Breast epithelium (tissue), 4 donors: ENCODE measurements at regions of chr4 and their contacts with region 1.

Region 1: GRCh38 chr4:170190265-170190664 is 100.5 kb upstream of the AADAT start:
- DNase-seq: no peak
- H3K4me3 ChIP-seq: no peak overlapping the region
- H3K27ac ChIP-seq: no peak overlapping the region
- H3K4me1 ChIP-seq: no peaks in the 10 kb centered on the region
- H3K27me3 ChIP-seq: no peaks in the 10 kb centered on the region
- CTCF ChIP-seq: no peak
- POLR2A ChIP-seq: no peak

Region 2: DNA sequence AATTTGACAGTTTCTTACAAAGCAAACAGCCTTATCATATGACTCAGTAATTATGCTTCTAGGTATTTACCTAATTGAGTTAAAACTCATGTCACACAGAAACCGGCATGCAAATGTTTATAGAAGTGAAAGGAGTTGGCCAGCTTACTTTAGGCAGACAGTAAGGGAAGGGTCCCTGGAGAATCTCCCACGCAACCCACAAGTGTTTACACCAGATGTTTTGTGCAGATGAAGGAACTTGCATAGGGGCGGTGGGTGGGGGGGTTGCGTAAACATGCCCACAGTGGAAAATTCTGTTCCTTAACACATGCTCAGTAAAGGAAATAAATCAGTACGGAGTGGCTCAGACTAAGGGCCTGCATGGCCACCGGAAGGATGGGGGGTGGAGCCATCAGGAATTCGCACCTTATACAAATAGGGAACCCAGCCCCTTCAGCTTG is 230.0 kb after region 1 on chr4:
- intact Hi-C with region 1: no loop called
- DNase-seq: no peak
- H3K4me3 ChIP-seq: no peak overlapping the region
- H3K27ac ChIP-seq: no peak overlapping the region
- H3K4me1 ChIP-seq: no peaks in the 10 kb centered on the region
- H3K27me3 ChIP-seq: no peaks in the 10 kb centered on the region
- CTCF ChIP-seq: no peak
- POLR2A ChIP-seq: no peak

Region 3: DNA sequence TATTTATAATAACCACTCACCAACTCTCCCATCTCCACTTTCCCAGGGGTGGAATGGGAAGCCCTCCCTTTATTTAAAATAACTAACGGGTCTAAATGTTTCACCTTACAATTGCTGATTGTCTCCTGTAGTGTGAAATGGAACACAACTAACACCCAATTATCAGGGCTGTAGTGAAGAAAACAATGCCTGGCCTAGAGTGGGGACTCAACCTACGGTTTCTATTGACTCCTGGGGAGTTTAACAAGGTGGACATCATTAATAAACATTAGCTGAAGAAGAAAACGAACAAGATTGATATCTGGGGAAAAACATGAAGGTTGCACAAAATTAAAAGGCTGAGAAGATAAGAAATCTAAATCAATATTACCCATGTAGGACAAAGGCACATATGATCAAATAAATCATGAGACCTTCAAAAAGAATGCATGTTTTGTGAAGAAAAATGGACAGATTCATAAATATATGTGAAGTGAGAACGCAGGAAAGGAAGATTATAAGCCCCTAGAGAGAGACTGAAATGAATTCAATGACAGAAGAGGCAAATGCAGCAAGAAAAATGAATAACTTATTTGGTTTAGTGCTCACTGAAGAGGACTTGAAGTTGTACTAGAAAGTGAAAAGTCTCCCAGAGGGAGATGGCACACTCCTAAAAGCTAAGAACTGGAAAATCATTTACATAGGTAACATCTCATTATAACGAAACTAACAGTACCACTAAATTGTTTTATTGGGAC is 492.5 kb after region 1 on chr4:
- intact Hi-C with region 1: loop called (anchors 5 kb)
- DNase-seq: no peak
- H3K4me3 ChIP-seq: no peak overlapping the region
- H3K27ac ChIP-seq: no peak overlapping the region
- H3K4me1 ChIP-seq: no peaks in the 10 kb centered on the region
- H3K27me3 ChIP-seq: no peaks in the 10 kb centered on the region
- CTCF ChIP-seq: no peak
- POLR2A ChIP-seq: no peak